ENCODE measurements at regions of chr11 and their contacts with region 1.

Region 1: DNA sequence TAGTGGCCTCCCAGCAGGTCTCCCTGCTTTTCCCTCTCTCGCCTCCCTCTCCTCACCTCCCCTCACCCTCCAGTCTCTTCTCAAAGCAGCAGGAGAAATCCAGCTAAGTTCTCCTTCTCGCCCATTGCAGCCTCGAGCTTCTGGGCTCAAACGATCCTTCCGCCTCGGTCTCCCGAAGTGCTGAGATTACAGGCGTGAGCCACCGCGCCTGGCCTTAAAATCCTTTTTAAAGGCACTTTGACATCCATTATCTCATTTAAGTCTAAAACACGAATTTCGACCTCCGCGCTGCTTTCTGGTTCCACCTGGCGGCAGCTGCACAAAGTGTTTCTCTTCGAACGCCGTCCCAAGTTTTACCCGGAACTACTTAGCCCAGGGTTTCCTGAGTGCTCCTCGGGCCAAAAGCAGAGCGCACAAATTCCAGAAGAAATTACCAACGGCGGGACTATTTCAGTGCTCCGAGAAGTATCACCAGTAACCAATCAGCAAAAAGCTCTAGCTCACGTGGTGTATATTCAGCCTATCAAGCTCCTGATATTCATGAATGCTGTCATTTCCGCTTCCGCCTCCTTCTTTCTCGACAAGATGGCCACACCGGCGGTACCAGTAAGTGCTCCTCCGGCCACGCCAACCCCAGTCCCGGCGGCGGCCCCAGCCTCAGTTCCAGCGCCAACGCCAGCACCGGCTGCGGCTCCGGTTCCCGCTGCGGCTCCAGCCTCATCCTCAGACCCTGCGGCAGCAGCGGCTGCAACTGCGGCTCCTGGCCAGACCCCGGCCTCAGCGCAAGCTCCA is at the start of gene EIF3F:
- DNase-seq: peak; percentile 94
- ATAC-seq: peak; percentile 97
- H3K4me3 Mint-ChIP-seq: peak within 1 kb of the TSS; percentile 93
- H3K27ac Mint-ChIP-seq: peak within 1 kb of the TSS; percentile 98
- H3K4me1 Mint-ChIP-seq: peaks cover 39% of the 10 kb centered on the region
- H3K27me3 Mint-ChIP-seq: no peaks in the 10 kb centered on the region
- CTCF ChIP-seq: peak; percentile 71
- total RNA-seq, gene EIF3F: 303 to 309 TPM

Region 2: GRCh38 chr11:7892840-7893254 is 94.1 kb before region 1 on chr11:
- CTCF ChIA-PET with region 1: interaction called, 101 read pairs
- POLR2A ChIA-PET with region 1: no interaction called
- intact Hi-C with region 1: loop called (anchors 1 kb)
- DNase-seq: no peak
- ATAC-seq: peak; percentile 90
- H3K4me3 Mint-ChIP-seq: no peak overlapping the region
- H3K27ac Mint-ChIP-seq: no peak overlapping the region
- H3K4me1 Mint-ChIP-seq: no peaks in the 10 kb centered on the region
- H3K27me3 Mint-ChIP-seq: peaks cover 3% of the 10 kb centered on the region
- CTCF ChIP-seq: peak; percentile 73

Region 3: DNA sequence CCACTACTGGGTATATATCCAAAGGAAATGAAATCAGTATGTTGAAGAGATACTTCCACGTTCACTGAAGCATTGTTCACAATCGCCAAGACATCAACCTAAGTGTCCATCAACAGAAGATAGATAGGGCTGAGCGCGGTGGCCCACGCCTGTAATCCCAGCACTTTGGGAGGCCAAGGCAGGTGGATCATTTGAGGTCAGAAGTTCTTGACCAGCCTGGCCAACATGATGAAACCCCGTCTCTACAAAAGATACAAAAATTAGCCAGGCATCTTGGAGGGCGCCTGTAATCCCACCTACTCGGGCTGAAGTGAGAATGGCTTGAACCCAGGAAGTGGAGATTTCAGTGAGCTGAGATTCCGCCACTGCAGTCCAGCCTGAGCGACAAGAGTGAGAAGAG is 12.8 kb after region 1 on chr11:
- CTCF ChIA-PET with region 1: interaction called, 11 read pairs
- POLR2A ChIA-PET with region 1: interaction called, 3 read pairs
- intact Hi-C with region 1: no loop called
- DNase-seq: no peak
- ATAC-seq: no peak
- H3K4me3 Mint-ChIP-seq: no peak overlapping the region
- H3K27ac Mint-ChIP-seq: no peak overlapping the region
- H3K4me1 Mint-ChIP-seq: peaks cover 2% of the 10 kb centered on the region
- H3K27me3 Mint-ChIP-seq: no peaks in the 10 kb centered on the region
- CTCF ChIP-seq: no peak

Region 4: DNA sequence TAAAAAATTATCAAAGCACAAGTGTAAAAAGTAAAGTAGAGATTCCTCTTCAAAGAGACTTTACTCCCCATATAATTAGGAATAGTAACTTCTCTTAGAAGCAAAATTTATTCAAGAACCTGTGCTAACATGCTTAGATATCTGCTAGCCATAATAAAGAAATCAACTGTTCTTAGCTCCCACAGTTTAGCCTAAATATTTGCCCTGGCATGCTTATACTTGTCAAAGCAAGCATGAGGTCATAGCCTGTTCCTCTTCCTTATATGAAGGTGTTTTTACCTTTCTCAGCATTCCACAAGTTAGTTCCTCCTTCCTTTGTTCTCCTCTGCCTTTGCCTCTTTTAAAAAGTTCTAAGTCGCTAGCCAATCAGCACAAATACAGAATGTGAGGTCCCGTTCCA is 151.6 kb after region 1 on chr11:
- CTCF ChIA-PET with region 1: no interaction called
- POLR2A ChIA-PET with region 1: no interaction called
- intact Hi-C with region 1: no loop called
- DNase-seq: no peak
- ATAC-seq: no peak
- H3K4me3 Mint-ChIP-seq: no peak overlapping the region
- H3K27ac Mint-ChIP-seq: no peak overlapping the region
- H3K4me1 Mint-ChIP-seq: no peaks in the 10 kb centered on the region
- H3K27me3 Mint-ChIP-seq: no peaks in the 10 kb centered on the region
- CTCF ChIP-seq: no peak

Measured in activated CD8-positive, alpha-beta T cell treated with anti-CD3 and anti-CD28 coated beads for 36 hours (primary cell).